Astrocyte of the cerebellum (primary cell): ENCODE measurements at regions of chr4 and their contacts with region 1.

Region 1: GRCh38 chr4:7559741-7560395 is 125.1 kb upstream of the PSAPL1 start:
- DNase-seq: no peak
- H3K4me3 ChIP-seq: no peak overlapping the region
- CTCF ChIP-seq: no peak

Region 2: GRCh38 chr4:7472442-7473013 is 87.3 kb before region 1 on chr4:
- in situ Hi-C with region 1: no loop called
- DNase-seq: no peak
- H3K4me3 ChIP-seq: no peak overlapping the region
- CTCF ChIP-seq: peak; percentile 5

Region 3: DNA sequence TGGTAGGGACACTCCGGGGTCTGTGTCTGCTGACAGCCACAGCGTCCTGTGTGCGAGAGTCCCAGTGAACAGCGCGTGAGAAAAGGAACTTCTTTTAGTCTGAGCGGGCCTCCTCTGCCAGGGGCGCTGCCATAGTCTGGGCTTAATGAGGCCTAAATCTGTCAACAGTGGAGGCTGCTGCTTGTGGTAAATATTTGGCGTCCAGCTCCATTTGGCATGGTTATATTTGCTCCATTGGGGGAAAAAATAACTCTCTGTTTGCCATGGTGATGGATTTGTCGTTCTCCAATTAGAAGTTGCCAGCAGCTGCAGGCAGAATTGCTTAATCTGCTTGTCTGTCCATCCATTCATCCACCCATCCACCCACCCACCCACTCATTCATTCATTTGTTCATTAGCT is 53.7 kb before region 1 on chr4:
- in situ Hi-C with region 1: loop called (anchors 5 kb)
- DNase-seq: peak; percentile 50
- H3K4me3 ChIP-seq: no peak overlapping the region
- CTCF ChIP-seq: no peak

Region 4: DNA sequence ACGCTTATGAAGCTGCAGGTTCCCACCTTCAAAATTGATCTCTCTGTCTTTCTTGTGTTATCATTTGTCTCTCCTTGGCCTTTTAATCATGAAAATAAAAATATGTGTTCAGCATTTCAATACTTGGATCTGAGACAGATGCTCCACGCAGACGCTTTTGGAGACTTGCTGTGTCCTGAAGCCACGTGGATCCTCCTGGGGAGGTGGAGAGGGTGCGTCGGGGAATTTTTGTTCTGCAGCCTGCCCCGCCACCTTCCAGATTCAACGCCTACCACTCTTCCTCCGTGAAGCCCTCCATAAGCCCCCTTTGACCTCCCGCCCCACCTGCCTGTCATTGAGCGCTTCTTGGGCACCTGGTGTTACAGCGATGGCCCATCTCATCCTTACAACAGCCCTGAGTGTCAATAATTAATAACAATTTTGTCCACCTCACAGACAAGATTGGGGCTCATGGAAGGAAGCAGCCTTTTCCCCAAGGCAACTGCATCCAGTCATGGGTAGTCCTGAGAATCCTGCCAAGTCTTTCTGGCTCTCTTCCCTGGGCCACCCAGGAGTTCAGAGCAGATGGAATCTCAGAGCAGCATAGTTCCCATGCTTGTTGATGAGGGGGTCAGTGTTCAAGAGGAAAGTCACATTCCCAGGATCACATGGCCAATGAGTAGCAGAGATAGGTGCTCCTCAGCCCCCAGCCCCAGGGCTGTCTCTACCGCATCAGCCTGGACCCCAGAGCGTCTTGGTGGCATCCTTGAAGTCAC is 47.5 kb after region 1 on chr4:
- in situ Hi-C with region 1: loop called (anchors 5 kb)
- DNase-seq: peak; percentile 43
- H3K4me3 ChIP-seq: no peak overlapping the region
- CTCF ChIP-seq: no peak